Gastrocnemius medialis (tissue), 4 donors: ENCODE measurements at regions of chr14 and their contacts with region 1.

Region 1: DNA sequence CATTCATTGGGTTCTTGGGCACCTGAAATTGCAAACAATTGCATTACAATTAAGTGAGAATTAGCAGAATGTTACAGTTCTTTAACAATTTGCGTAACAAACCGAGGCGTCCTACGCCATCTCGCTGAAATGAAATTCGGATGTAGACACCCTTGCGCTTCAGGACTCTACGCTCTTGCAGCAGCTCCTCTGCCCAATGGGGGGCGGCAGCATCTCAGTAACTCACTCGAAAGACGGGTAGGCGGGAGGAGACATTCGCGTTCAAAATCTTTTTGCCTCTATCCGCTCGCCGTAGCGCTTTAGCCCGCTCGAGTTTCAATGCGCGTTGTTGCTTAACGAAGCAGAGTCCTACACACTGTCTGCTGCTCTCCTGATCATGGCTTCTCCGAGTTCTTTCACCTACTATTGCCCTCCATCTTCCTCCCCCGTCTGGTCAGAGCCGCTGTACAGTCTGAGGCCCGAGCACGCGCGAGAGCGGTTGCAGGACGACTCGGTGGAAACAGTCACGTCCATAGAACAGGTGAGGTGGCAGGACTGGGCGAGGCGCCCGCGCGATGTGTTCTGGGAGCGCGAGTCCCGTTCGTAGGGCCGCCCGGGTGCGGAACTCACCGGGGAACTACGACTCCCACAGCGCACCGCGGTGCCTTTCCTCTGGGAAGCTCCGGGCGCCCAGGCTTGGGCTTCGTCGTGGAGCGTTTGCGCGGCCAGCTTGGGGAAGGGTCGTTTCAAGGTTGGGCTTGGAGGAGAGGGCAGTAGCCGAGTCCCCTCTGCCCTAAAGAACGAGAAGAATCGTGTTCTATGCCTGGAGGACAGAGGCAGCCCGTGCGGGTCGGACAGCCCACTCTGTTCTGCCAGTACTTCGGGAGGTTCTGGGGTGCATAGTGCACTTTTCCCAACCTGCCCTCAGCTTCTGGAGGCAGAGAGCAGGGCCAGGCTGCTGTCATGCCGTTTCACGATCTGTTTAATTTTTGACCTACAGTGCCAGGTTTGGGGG is at the start of gene FNTB:
- DNase-seq: peak; percentile 94 to 95
- ATAC-seq: peak; percentile 94
- H3K4me3 ChIP-seq: peak within 1 kb of the TSS; percentile 67 to 85 (median 74)
- H3K27ac ChIP-seq: peak within 1 kb of the TSS; percentile 86 to 93 (median 92)
- H3K4me1 ChIP-seq: peaks cover 11 to 14% of the 10 kb centered on the region in 2 donors
- H3K27me3 ChIP-seq: no peaks in the 10 kb centered on the region
- CTCF ChIP-seq: peak; percentile 58 to 83 (median 74)
- POLR2A ChIP-seq: peak; percentile 72 to 75
- total RNA-seq, gene FNTB: 6.1 to 40.6 (median 18.0) TPM

Region 2: DNA sequence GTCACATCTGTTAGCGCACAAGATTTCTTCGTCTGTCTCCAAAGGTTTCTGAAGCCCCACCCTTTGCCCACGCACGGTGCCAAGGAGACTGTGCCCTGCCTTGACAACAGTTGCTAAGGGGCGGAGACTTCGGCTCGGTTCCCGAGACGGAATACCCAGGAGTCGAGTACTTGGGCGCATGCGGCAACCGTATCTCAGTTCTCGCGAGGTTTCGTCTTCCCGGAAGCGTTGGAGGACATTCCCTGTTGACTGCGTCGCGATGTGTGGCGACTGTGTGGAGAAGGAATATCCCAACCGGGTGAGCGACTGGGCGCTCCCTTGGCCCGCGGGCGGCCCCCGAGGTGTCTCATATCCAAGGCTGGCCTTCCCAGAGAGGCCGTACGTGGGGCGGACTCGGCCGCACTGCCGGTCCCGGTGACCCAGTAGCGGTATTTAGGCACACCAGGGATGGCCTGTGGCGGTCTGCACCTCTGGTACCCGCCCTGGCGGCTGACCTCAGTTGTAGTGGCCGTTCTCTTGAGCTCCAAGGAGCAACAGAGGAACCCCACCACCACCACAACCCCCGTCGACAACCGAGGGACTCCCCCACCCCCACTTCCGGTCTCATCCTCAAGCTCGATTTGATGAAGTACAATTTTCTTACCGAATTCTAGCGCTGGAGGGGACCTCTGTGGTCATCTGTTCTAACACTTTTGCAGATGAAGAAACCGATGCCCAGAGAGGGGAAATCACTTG is 72.5 kb before region 1 on chr14 and contains the start of gene CHURC1:
- in situ Hi-C with region 1: loop called in 1 of 4 experiments (anchors 10 kb)
- intact Hi-C with region 1: no loop called
- DNase-seq: peak; percentile 97 to 99
- ATAC-seq: peak; percentile 99
- H3K4me3 ChIP-seq: peak within 1 kb of the TSS; percentile 86 to 100 (median 90)
- H3K27ac ChIP-seq: peak within 1 kb of the TSS; percentile 95 to 98 (median 97)
- H3K4me1 ChIP-seq: peaks cover 34 to 39% of the 10 kb centered on the region in 2 donors
- H3K27me3 ChIP-seq: no peaks in the 10 kb centered on the region
- CTCF ChIP-seq: no peak
- POLR2A ChIP-seq: peak; percentile 79 to 91
- total RNA-seq, gene CHURC1: 47.9 to 108 (median 79.6) TPM

Region 3: DNA sequence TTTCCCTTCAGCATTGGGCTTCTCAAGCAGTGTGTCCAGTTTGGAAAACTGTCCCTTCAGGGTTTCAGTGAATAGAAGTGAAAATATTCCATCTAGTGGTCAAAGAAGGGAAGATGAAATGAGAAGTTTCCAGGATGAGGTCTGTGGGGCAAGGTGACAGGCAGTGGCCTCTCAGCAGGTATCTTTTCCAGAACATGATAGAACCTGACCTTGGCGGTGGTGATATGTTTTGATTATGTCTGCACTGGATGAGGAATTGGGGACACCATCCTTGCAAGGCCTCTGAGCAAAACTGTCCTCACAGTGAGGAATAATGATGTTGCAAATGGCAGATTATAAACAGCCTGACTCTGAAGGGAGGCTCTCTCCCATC is 49.1 kb before region 1 on chr14:
- in situ Hi-C with region 1: no loop called
- intact Hi-C with region 1: no loop called
- DNase-seq: no peak
- ATAC-seq: no peak
- H3K4me3 ChIP-seq: no peak overlapping the region
- H3K27ac ChIP-seq: peak overlapping the region; percentile 64 to 83 (median 72)
- H3K4me1 ChIP-seq: peaks cover 38 to 44% of the 10 kb centered on the region in 2 donors
- H3K27me3 ChIP-seq: no peaks in the 10 kb centered on the region
- CTCF ChIP-seq: no peak
- POLR2A ChIP-seq: no peak

Region 4: GRCh38 chr14:65102441-65103149 is 115.7 kb after region 1 on chr14 and contains the start of gene MAX:
- in situ Hi-C with region 1: loop called in 1 of 4 experiments (anchors 10 kb)
- intact Hi-C with region 1: loop called (anchors 1 kb)
- DNase-seq: peak; percentile 99
- ATAC-seq: peak; percentile 88 to 90
- H3K4me3 ChIP-seq: peak within 1 kb of the TSS; percentile 85 to 98 (median 96)
- H3K27ac ChIP-seq: peak within 1 kb of the TSS; percentile 96 to 98 (median 98)
- H3K4me1 ChIP-seq: peaks cover 37% of the 10 kb centered on the region in 2 donors
- H3K27me3 ChIP-seq: no peaks in the 10 kb centered on the region
- CTCF ChIP-seq: no peak
- POLR2A ChIP-seq: peak; percentile 83 to 93
- total RNA-seq, gene MAX: 27.5 to 50.0 (median 37.2) TPM

Region 5: GRCh38 chr14:65356327-65356852 is 369.5 kb after region 1 on chr14:
- in situ Hi-C with region 1: loop called in 2 of 4 experiments (anchors 25 kb)
- intact Hi-C with region 1: loop called (anchors 5 kb)
- DNase-seq: no peak
- ATAC-seq: no peak
- H3K4me3 ChIP-seq: no peak overlapping the region
- H3K27ac ChIP-seq: peak overlapping the region in 3 of 4 donors; percentile 49 to 62 (median 61)
- H3K4me1 ChIP-seq: peaks cover 33 to 43% of the 10 kb centered on the region in 2 donors
- H3K27me3 ChIP-seq: no peaks in the 10 kb centered on the region
- CTCF ChIP-seq: no peak
- POLR2A ChIP-seq: no peak

Region 6: DNA sequence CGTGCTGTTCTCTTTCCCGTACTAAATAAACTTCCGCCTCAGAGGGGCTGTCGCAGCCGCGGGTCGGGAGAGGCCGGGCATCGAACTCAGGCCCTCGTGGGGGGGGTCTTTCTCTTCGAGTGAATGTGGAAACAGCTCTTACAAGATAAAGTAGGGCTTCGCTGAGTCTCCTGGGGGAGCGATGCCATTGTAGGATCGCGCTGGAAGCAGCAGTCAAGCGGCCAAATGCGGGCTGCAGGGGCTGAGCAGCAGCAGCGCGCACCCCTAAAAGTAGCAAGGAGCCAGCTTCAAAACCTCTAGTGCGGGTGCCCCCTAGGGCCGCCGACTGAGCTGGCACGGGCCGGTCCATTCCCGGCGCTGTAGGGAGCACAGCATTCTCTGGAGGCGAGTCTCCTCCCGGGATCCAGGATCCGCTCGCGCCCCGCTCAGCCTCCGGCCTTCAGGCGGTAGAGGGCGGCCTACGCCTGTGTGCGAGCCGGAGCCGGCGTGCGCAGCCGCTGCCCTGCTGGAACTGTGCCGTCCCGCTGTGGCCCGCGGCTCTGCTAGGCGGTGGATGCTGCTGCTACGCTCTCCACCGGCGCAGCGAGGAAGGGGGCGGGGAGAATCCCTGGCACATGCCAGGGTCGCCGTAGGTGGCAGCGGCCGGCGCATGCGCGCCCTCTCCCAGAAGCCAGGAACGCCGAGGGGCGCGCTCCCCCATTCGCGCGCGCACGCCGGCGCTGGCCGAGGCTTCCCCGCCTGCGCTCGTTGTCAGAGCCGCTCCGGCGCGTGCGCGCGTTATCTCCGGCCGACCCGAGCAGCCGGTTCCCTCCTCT is 425.4 kb after region 1 on chr14 and contains the start of gene FUT8:
- in situ Hi-C with region 1: no loop called
- intact Hi-C with region 1: loop called (anchors 5 kb)
- DNase-seq: peak; percentile 90 to 95
- ATAC-seq: peak; percentile 77 to 83
- H3K4me3 ChIP-seq: peak within 1 kb of the TSS; percentile 79 to 98 (median 94)
- H3K27ac ChIP-seq: peak within 1 kb of the TSS; percentile 82 to 93 (median 90)
- H3K4me1 ChIP-seq: peaks cover 4 to 8% of the 10 kb centered on the region in 2 donors
- H3K27me3 ChIP-seq: no peaks in the 10 kb centered on the region
- CTCF ChIP-seq: peak; percentile 42 to 78 (median 58)
- POLR2A ChIP-seq: peak; percentile 50 to 55
- total RNA-seq, gene FUT8: 6.5 to 11.3 (median 9.3) TPM

Region 7: GRCh38 chr14:65832431-65833266 is 845.8 kb after region 1 on chr14:
- in situ Hi-C with region 1: loop called in 2 of 4 experiments (anchors 25 kb)
- intact Hi-C with region 1: no loop called
- DNase-seq: peak in 1 of 2 donors; percentile 33
- ATAC-seq: peak in 1 of 2 donors; percentile 70
- H3K4me3 ChIP-seq: no peak overlapping the region
- H3K27ac ChIP-seq: peak overlapping the region in 2 of 4 donors; percentile 40 to 47
- H3K4me1 ChIP-seq: no peaks in the 10 kb centered on the region
- H3K27me3 ChIP-seq: no peaks in the 10 kb centered on the region
- CTCF ChIP-seq: no peak
- POLR2A ChIP-seq: no peak